Vagina (tissue), 2 donors: ENCODE measurements at regions of chr15 and their contacts with region 1.

Region 1: GRCh38 chr15:40694688-40695468 is at the start of gene RAD51:
- DNase-seq: peak in 1 of 2 donors; percentile 90
- H3K4me3 ChIP-seq: peak within 1 kb of the TSS; percentile 73 to 80
- H3K27ac ChIP-seq: peak within 1 kb of the TSS; percentile 98
- H3K4me1 ChIP-seq: peaks cover 19% of the 10 kb centered on the region
- H3K27me3 ChIP-seq: no peaks in the 10 kb centered on the region
- CTCF ChIP-seq: no peak
- POLR2A ChIP-seq: peak in 1 of 2 donors; percentile 9
- total RNA-seq, gene RAD51: 4.2 TPM

Region 2: GRCh38 chr15:40754883-40755811 is 60.3 kb after region 1 on chr15 and contains the start of gene RMDN3:
- intact Hi-C with region 1: loop called (anchors 10 kb)
- DNase-seq: peak in 1 of 2 donors; percentile 94
- H3K4me3 ChIP-seq: peak within 1 kb of the TSS; percentile 64 to 71
- H3K27ac ChIP-seq: peak within 1 kb of the TSS; percentile 81
- H3K4me1 ChIP-seq: peaks cover 20% of the 10 kb centered on the region
- H3K27me3 ChIP-seq: no peaks in the 10 kb centered on the region
- CTCF ChIP-seq: no peak
- POLR2A ChIP-seq: peak in 1 of 2 donors; percentile 45
- total RNA-seq, gene RMDN3: 19.6 TPM

Region 3: GRCh38 chr15:40838776-40839175 is 143.9 kb after region 1 on chr15:
- intact Hi-C with region 1: no loop called
- DNase-seq: no peak
- H3K4me3 ChIP-seq: no peak overlapping the region
- H3K27ac ChIP-seq: no peak overlapping the region
- H3K4me1 ChIP-seq: no peaks in the 10 kb centered on the region
- H3K27me3 ChIP-seq: no peaks in the 10 kb centered on the region
- CTCF ChIP-seq: no peak
- POLR2A ChIP-seq: no peak